Activated CD8-positive, alpha-beta T cell treated with anti-CD3 and anti-CD28 coated beads, Interleukin-2, amount 10 ng/mL, durations not matched to agents 7 days and 5 days (primary cell): ENCODE measurements at regions of chr1 and their contacts with region 1.

Region 1: DNA sequence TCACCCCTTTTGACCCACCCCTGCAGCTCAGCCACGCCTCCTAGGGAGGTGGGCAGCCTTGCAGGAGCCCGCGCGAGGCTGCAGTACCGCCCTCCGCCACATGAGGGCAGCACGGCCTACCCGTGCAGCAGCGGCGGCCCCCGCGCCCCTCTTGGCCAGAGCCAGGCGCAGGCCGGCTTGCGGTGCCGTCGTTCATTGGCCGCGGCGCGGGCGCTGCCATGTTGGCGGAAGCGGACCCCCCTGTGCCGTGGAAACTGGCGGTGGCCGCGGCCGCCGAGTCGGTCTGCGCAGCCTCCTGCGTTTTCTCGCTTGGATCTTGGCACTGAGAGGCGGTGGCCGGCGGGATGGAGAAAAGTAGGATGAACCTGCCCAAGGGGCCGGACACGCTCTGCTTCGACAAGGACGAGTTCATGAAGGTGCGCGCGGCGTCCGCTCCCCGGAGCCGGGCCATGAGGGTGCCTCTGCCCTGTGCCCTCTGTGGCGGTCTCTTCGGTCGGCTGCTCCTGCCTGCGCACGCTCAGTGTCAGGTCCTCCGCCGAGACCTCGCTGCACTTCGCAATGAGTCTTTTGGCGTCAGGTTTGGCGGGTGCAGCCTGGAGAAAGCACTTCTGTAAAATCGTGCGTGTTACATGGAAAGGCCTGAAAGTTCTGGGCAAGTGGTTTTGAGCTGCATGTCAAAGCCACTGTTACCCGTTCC is at the start of gene COG2:
- DNase-seq: peak; percentile 95
- ATAC-seq: peak; percentile 96
- H3K4me3 Mint-ChIP-seq: peak within 1 kb of the TSS; percentile 95
- H3K27ac Mint-ChIP-seq: peak within 1 kb of the TSS; percentile 96
- H3K4me1 Mint-ChIP-seq: peaks cover 42% of the 10 kb centered on the region
- H3K27me3 Mint-ChIP-seq: peaks cover 9% of the 10 kb centered on the region
- total RNA-seq, gene COG2: 29.9 to 31.2 TPM

Region 2: GRCh38 chr1:230668227-230668626 is 25.8 kb after region 1 on chr1:
- CTCF ChIA-PET with region 1: interaction called, 13 read pairs
- POLR2A ChIA-PET with region 1: no interaction called
- DNase-seq: no peak
- ATAC-seq: no peak
- H3K4me3 Mint-ChIP-seq: no peak overlapping the region
- H3K27ac Mint-ChIP-seq: no peak overlapping the region
- H3K4me1 Mint-ChIP-seq: no peaks in the 10 kb centered on the region
- H3K27me3 Mint-ChIP-seq: no peaks in the 10 kb centered on the region